OCI-LY7 (cell line): ENCODE measurements at regions of chr1 and their contacts with region 1.

Region 1: DNA sequence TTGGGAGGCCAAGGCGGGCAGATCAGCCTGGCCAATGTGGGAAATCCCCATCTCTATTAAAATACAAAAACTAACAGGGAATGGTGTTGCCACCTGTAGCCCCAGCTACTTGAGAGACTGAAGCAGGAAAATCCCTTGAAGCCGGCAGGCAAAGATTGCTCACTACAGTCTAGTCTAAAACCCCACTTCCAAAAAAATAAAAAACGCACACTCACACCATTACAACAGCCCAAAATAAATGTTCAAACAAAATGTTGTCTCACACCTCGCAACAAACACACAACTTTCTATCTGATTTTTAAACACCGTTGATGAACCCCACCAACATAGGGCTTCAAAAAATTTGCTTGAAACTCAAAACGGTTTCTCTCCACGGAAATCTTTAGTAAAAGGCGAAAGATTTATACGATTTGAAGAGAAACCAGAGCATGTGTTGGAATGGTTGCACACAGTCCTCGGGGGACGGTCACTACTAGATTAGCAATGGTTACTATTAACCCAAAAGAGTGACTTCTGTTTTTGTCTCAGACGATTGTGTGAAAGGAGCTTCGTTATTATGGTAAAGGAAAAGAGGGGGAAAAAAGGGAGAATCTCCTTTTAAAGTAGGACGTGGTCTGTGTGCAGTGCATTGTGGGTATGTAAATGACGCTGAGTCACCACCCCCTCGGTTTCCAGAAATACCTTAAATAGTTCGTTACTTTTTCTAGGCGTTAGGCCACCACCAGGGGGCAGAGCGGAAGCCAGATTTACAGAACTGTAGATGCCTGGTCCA is at the start of gene RNU5D-1:
- DNase-seq: peak; percentile 98
- H3K4me3 ChIP-seq: peak within 1 kb of the TSS; percentile 46
- H3K27ac ChIP-seq: peak within 1 kb of the TSS; percentile 96
- H3K4me1 ChIP-seq: peaks cover 52% of the 10 kb centered on the region
- CTCF ChIP-seq: peak; percentile 91
- total RNA-seq, gene RNU5D-1: not detected in 2 replicates

Region 2: GRCh38 chr1:44576456-44577150 is 154.3 kb before region 1 on chr1:
- CTCF ChIA-PET with region 1: no interaction called
- POLR2A ChIA-PET with region 1: no interaction called
- intact Hi-C with region 1: no loop called
- DNase-seq: no peak
- H3K4me3 ChIP-seq: no peak overlapping the region
- H3K27ac ChIP-seq: no peak overlapping the region
- H3K4me1 ChIP-seq: no peaks in the 10 kb centered on the region
- CTCF ChIP-seq: no peak

Region 3: GRCh38 chr1:44684525-44684924 is 46.4 kb before region 1 on chr1:
- CTCF ChIA-PET with region 1: no interaction called
- POLR2A ChIA-PET with region 1: no interaction called
- intact Hi-C with region 1: no loop called
- DNase-seq: peak; percentile 46
- H3K4me3 ChIP-seq: no peak overlapping the region
- H3K27ac ChIP-seq: peak overlapping the region; percentile 37
- H3K4me1 ChIP-seq: peaks cover 13% of the 10 kb centered on the region
- CTCF ChIP-seq: no peak

Region 4: GRCh38 chr1:44696789-44697345 is 34.1 kb before region 1 on chr1:
- CTCF ChIA-PET with region 1: no interaction called
- POLR2A ChIA-PET with region 1: interaction called, 26 read pairs
- intact Hi-C with region 1: no loop called
- DNase-seq: peak; percentile 73
- H3K4me3 ChIP-seq: peak overlapping the region; percentile 25
- H3K27ac ChIP-seq: peak overlapping the region; percentile 80
- H3K4me1 ChIP-seq: peaks cover 57% of the 10 kb centered on the region
- CTCF ChIP-seq: no peak

Region 5: DNA sequence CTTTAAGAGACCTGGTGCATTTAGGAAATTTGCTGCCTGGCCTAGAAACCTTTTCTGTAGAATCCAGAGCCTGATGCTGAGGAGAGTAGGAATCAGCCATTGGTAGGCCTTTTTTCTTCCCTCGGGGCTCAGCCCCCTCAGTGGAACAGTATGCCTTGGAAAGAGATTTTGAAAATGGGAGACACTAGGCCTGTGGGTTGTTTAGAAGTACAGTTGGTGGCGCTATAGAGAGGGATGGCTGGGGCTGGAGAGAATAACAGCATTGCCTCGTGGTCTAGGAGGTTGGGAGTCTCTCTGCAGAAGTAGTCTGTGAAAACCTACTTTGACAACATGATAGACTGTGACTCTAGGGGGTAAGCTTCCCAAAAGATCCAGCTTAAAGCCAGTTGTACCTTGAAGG is 17.0 kb after region 1 on chr1:
- CTCF ChIA-PET with region 1: no interaction called
- POLR2A ChIA-PET with region 1: interaction called, 45 read pairs
- intact Hi-C with region 1: no loop called
- DNase-seq: no peak
- H3K4me3 ChIP-seq: no peak overlapping the region
- H3K27ac ChIP-seq: no peak overlapping the region
- H3K4me1 ChIP-seq: peaks cover 11% of the 10 kb centered on the region
- CTCF ChIP-seq: peak; percentile 39; the same call in 1 of the 2 replicates

Region 6: GRCh38 chr1:44786138-44786840 is 55.4 kb after region 1 on chr1:
- CTCF ChIA-PET with region 1: no interaction called
- POLR2A ChIA-PET with region 1: interaction called, 20 read pairs
- intact Hi-C with region 1: no loop called
- DNase-seq: peak; percentile 78
- H3K4me3 ChIP-seq: peak overlapping the region; percentile 56
- H3K27ac ChIP-seq: no peak overlapping the region
- H3K4me1 ChIP-seq: peaks cover 35% of the 10 kb centered on the region
- CTCF ChIP-seq: peak; percentile 97

Region 7: GRCh38 chr1:44812822-44813543 is 82.1 kb after region 1 on chr1:
- CTCF ChIA-PET with region 1: interaction called, 8 read pairs
- POLR2A ChIA-PET with region 1: interaction called, 50 read pairs
- intact Hi-C with region 1: no loop called
- DNase-seq: no peak
- H3K4me3 ChIP-seq: peak overlapping the region; percentile 64
- H3K27ac ChIP-seq: no peak overlapping the region
- H3K4me1 ChIP-seq: peaks cover 35% of the 10 kb centered on the region
- CTCF ChIP-seq: no peak

Region 8: GRCh38 chr1:45011837-45012638 is 281.1 kb after region 1 on chr1 and contains the start of gene UROD:
- CTCF ChIA-PET with region 1: no interaction called
- POLR2A ChIA-PET with region 1: interaction called, 7 read pairs
- intact Hi-C with region 1: loop called (anchors 2 kb)
- DNase-seq: peak; percentile 97
- H3K4me3 ChIP-seq: peak within 1 kb of the TSS; percentile 83
- H3K27ac ChIP-seq: peak within 1 kb of the TSS; percentile 49
- H3K4me1 ChIP-seq: peaks cover 20% of the 10 kb centered on the region
- CTCF ChIP-seq: no peak
- total RNA-seq, gene UROD: 57.4 and 73.5 TPM in 2 replicates